ENCODE measurements at regions of chr19 and their contacts with region 1.

Region 1: DNA sequence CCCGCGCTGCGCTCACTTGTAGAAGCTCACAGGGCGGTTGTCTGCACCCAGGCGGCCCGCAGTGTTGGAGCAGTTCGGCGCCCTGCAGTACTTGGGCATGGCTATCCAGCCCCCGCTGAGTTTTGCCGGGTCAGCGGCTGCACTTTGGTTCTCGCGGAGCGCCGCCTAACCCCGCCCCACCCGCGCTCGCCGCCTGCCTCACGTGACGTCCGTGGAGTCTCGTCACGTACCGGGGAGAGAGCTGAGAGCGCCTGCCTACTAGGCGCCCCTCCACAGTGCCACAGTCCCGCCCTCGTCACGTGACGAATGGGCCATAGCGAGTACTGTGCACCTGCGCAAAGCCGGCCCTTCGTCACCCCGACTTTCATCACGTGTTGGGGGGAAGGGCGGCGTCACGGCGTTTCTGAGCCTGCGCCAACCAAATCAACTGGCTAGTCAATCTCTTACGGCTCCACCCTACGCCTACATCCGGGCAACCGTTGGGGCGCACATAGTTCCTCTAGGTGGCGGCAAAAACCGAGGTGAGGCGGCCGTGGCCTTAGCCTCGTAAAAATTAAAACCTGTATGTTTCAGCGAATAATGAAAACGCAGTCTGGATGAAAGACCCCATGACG is at the start of gene THAP8:
- DNase-seq: peak; percentile 96 to 100 (median 100)
- ATAC-seq: peak; percentile 91
- H3K4me3 ChIP-seq: peak within 1 kb of the TSS; percentile 84
- H3K4me3 Mint-ChIP-seq: peak within 1 kb of the TSS; percentile 91 to 100 (median 99)
- H3K27ac ChIP-seq: peak within 1 kb of the TSS; percentile 83
- H3K27ac Mint-ChIP-seq: peak within 1 kb of the TSS; percentile 94 to 100 (median 98)
- H3K4me1 ChIP-seq: peaks cover 8 to 10% of the 10 kb centered on the region in 2 donors
- H3K4me1 Mint-ChIP-seq: peaks cover 6 to 43% (median 34%) of the 10 kb centered on the region in 7 donors
- H3K27me3 ChIP-seq: no peaks in the 10 kb centered on the region
- H3K27me3 Mint-ChIP-seq: no peaks in the 10 kb centered on the region
- total RNA-seq, gene THAP8: 2.2 to 6.6 (median 6.1) TPM

Region 2: DNA sequence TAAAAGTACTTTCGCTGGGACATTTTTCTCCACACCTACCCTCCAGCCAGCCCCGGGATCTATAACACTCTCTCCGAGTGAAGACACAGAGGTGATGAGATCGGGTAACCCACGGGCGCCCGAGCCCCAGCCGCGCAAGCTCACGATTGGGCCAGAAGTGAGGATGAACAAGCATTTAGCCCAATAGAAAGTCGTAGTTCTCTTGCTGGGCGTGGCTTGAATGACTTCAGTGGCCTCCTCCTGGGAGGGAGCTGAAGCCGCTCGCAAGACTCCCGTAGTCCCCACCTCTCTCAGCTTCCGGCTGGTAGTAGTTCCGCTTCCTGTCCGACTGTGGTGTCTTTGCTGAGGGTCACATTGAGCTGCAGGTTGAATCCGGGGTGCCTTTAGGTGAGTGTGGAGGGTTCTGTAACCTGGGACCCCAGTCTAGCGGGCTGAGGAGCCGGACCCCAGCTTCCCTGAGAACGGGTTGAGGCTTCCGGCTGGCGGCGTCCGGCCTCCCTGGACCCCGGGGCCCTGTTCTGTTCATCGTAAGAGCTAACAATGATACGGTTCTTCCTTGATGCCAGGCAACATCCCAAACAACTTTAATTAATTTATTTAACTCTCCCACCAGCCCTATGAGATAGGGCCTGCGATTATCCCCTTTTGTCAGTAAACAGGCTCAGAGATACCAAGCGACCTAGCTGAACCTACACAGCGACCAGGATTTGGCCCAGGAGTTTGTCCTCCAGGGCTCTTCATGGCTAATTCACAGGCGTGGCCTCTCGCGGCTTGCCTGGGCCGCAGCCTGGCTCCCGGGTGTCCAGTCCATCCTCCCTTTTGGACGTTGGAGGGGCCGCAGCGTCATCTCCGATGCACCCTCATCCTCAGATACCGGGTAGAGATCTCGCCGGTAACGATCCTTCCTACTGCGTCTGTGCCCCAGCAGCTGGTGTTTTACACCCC is 405.9 kb before region 1 on chr19 and contains the start of gene COX6B1:
- CTCF ChIA-PET with region 1: no interaction called
- POLR2A ChIA-PET with region 1: no interaction called
- intact Hi-C with region 1: loop called (anchors 1 to 5 kb)
- DNase-seq: peak; percentile 63 to 95 (median 91)
- ATAC-seq: peak; percentile 80
- H3K4me3 ChIP-seq: peak within 1 kb of the TSS; percentile 95
- H3K4me3 Mint-ChIP-seq: peak within 1 kb of the TSS; percentile 88 to 99 (median 97)
- H3K27ac ChIP-seq: peak within 1 kb of the TSS; percentile 89
- H3K27ac Mint-ChIP-seq: peak within 1 kb of the TSS; percentile 89 to 98 (median 95)
- H3K4me1 ChIP-seq: peaks cover 7 to 25% of the 10 kb centered on the region in 2 donors
- H3K4me1 Mint-ChIP-seq: peaks cover 17 to 67% (median 42%) of the 10 kb centered on the region in 7 donors
- H3K27me3 ChIP-seq: no peaks in the 10 kb centered on the region
- H3K27me3 Mint-ChIP-seq: no peaks in the 10 kb centered on the region
- total RNA-seq, gene COX6B1: 172 to 464 (median 232) TPM

Region 3: GRCh38 chr19:35748106-35749020 is 305.9 kb before region 1 on chr19 and contains the start of gene LIN37:
- CTCF ChIA-PET with region 1: no interaction called
- POLR2A ChIA-PET with region 1: interaction called, 3 read pairs
- intact Hi-C with region 1: loop called (anchors 1 kb)
- DNase-seq: peak; percentile 91 to 100 (median 99)
- ATAC-seq: peak; percentile 83
- H3K4me3 ChIP-seq: peak within 1 kb of the TSS; percentile 95
- H3K4me3 Mint-ChIP-seq: peak within 1 kb of the TSS; percentile 90 to 100 (median 98)
- H3K27ac ChIP-seq: peak within 1 kb of the TSS; percentile 85
- H3K27ac Mint-ChIP-seq: peak within 1 kb of the TSS; percentile 89 to 97 (median 95)
- H3K4me1 ChIP-seq: peaks cover 28 to 30% of the 10 kb centered on the region in 2 donors
- H3K4me1 Mint-ChIP-seq: peaks cover 14 to 56% (median 43%) of the 10 kb centered on the region in 7 donors
- H3K27me3 ChIP-seq: no peaks in the 10 kb centered on the region
- H3K27me3 Mint-ChIP-seq: peaks cover 0 to 2% (median 0%) of the 10 kb centered on the region in 5 donors
- total RNA-seq, gene LIN37: 7.9 to 33.1 (median 18.9) TPM

Region 4: DNA sequence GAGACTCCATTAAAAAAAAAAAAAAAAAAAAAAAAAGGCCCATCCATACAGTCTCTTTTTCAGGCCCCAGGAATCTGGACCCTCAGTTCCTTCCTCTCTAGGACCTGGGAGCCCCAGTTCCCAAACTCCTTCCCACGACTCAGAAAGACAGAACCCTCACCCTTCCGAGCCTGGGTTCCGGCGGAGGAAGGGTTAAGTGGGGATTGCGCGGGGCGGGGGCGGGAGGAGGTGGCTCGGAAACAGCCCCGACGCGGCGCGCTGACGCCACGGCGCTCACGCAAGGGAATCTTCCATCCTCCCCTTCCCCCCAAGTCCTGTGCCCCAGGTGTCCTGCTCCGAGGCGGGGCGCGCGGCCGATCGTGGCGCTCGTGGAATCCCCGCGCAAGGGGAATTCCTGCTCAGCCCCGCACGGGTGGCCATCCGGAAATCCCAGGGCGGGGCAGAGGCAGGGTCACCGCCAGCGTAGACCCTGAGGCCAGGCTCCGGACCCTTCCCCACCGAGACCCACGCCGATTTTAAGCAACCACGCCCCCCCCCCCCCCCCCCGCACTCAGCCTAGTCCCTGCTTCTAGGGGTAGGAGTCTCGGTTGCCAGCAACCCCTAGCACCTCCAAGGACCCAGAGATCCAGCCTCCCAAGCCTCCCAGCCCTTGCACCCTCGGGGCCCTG is 154.5 kb before region 1 on chr19:
- CTCF ChIA-PET with region 1: no interaction called
- POLR2A ChIA-PET with region 1: interaction called, 4 read pairs
- intact Hi-C with region 1: loop called (anchors 1 kb)
- DNase-seq: peak; percentile 74 to 94 (median 87)
- ATAC-seq: peak; percentile 74
- H3K4me3 ChIP-seq: peak overlapping the region; percentile 94
- H3K4me3 Mint-ChIP-seq: peak overlapping the region; percentile 83 to 100 (median 95)
- H3K27ac ChIP-seq: peak overlapping the region; percentile 100
- H3K27ac Mint-ChIP-seq: peak overlapping the region; percentile 92 to 97 (median 96)
- H3K4me1 ChIP-seq: peaks cover 35 to 43% of the 10 kb centered on the region in 2 donors
- H3K4me1 Mint-ChIP-seq: peaks cover 34 to 65% (median 46%) of the 10 kb centered on the region in 7 donors
- H3K27me3 ChIP-seq: no peaks in the 10 kb centered on the region
- H3K27me3 Mint-ChIP-seq: no peaks in the 10 kb centered on the region

Region 5: GRCh38 chr19:35963514-35963913 is 90.7 kb before region 1 on chr19:
- CTCF ChIA-PET with region 1: interaction called, 7 read pairs
- POLR2A ChIA-PET with region 1: interaction called, 7 read pairs
- intact Hi-C with region 1: loop called in 1 of 2 experiments (anchors 1 kb)
- DNase-seq: peak in 7 of 9 donors; percentile 26 to 57 (median 47)
- ATAC-seq: no peak
- H3K4me3 ChIP-seq: no peak overlapping the region
- H3K4me3 Mint-ChIP-seq: no peak overlapping the region
- H3K27ac ChIP-seq: no peak overlapping the region
- H3K27ac Mint-ChIP-seq: no peak overlapping the region
- H3K4me1 ChIP-seq: peaks cover 10 to 11% of the 10 kb centered on the region in 2 donors
- H3K4me1 Mint-ChIP-seq: peaks cover 0 to 15% (median 9%) of the 10 kb centered on the region in 7 donors
- H3K27me3 ChIP-seq: no peaks in the 10 kb centered on the region
- H3K27me3 Mint-ChIP-seq: peaks cover 0 to 30% (median 0%) of the 10 kb centered on the region in 5 donors

Region 6: DNA sequence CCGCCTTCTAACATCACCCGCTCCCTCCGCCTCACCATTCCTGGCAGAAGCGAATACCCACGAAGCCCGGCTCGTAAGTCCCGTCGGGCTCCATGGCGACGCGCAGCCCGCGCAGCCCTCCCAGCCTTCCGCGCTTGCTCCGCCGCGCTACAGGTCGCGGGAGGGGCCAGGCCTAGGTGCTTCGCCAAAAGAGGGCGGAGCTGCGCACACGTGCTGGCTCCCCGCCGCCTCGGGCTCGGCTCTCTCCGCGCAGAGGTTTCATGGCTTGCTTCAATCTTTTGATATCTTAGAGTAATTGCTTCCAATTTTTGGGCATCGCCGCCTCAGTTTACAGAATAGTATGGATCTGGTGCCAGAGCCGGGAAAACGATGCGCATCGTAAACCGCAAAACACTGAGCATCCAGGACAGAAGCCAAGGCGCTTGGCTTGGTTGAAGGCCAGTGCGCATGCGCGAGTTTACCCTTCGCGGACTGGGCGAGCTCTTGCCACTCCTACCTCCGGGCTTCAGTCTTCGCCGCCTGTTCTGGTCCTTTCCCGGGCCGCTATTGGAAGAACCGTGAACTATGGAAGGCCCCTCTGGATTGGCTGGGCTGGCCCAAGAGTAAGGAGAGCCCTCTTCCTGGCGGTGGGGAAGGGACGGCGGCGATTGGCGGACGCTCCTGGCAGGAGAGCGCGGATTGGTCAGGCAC is 60.7 kb after region 1 on chr19 and contains the start of gene POLR2I:
- CTCF ChIA-PET with region 1: no interaction called
- POLR2A ChIA-PET with region 1: interaction called, 4 read pairs
- intact Hi-C with region 1: loop called (anchors 1 kb)
- DNase-seq: peak; percentile 95 to 100 (median 99)
- ATAC-seq: peak; percentile 92
- H3K4me3 ChIP-seq: peak within 1 kb of the TSS; percentile 97
- H3K4me3 Mint-ChIP-seq: peak within 1 kb of the TSS; percentile 89 to 98 (median 96)
- H3K27ac ChIP-seq: peak within 1 kb of the TSS; percentile 90
- H3K27ac Mint-ChIP-seq: peak within 1 kb of the TSS; percentile 97 to 99 (median 98)
- H3K4me1 ChIP-seq: peaks cover 14 to 15% of the 10 kb centered on the region in 2 donors
- H3K4me1 Mint-ChIP-seq: peaks cover 27 to 54% (median 42%) of the 10 kb centered on the region in 7 donors
- H3K27me3 ChIP-seq: no peaks in the 10 kb centered on the region
- H3K27me3 Mint-ChIP-seq: peaks cover 0 to 5% (median 0%) of the 10 kb centered on the region in 5 donors
- total RNA-seq, gene POLR2I: 20.9 to 56.7 (median 44.7) TPM

Region 7: DNA sequence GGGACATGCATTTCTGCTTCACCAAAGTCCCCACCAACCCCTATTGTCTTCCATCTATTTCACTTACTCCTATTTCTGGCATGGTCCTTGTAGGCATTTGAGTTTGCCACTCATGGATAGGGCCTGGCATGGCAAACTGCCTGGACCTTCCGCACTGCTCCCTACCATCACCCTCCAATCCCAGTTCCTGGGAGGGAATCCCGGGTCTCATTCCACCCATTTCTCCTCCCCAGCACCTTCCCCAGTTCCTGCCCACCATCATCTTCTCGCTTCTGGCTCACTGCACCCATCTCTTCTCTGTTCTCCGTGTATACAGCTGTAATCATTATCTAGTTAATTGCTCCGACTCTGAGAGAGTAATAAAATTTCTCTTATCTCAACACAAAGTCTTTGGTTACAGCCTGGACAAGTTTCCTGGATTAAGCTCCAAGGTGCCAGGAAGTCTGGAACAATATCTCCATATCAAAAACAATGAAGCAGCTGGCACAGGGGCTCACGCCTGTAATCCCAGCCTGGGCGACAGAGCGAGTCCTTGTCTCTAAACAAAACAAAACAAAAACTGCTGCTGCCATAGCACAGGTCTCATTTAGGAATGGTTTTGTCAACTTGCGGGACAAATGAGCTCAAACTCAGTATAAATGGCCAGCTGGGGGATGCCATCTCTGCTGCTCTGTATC is 115.0 kb after region 1 on chr19:
- CTCF ChIA-PET with region 1: interaction called, 3 read pairs
- POLR2A ChIA-PET with region 1: no interaction called
- intact Hi-C with region 1: loop called in 1 of 2 experiments (anchors 1 kb)
- DNase-seq: no peak
- ATAC-seq: no peak
- H3K4me3 ChIP-seq: no peak overlapping the region
- H3K4me3 Mint-ChIP-seq: no peak overlapping the region
- H3K27ac ChIP-seq: no peak overlapping the region
- H3K27ac Mint-ChIP-seq: peak overlapping the region in 2 of 9 donors; percentile 6 to 18
- H3K4me1 ChIP-seq: no peaks in the 10 kb centered on the region
- H3K4me1 Mint-ChIP-seq: peaks cover 0 to 5% (median 0%) of the 10 kb centered on the region in 7 donors
- H3K27me3 ChIP-seq: no peaks in the 10 kb centered on the region
- H3K27me3 Mint-ChIP-seq: no peaks in the 10 kb centered on the region

Measured in naive thymus-derived CD4-positive, alpha-beta T cell (primary cell).